Mammary epithelial cell (primary cell): ENCODE measurements at regions of chr16 and their contacts with region 1.

Region 1: GRCh38 chr16:2829501-2830356 is at the start of gene ZG16B:
- DNase-seq: peak; percentile 35
- H3K4me3 ChIP-seq: no peak within 1 kb of the TSS
- H3K27ac ChIP-seq: no peak within 1 kb of the TSS
- H3K4me1 ChIP-seq: no peaks in the 10 kb centered on the region
- H3K27me3 ChIP-seq: peaks cover 8% of the 10 kb centered on the region
- CTCF ChIP-seq: no peak
- total RNA-seq, gene ZG16B: 2.7 TPM in 1 of 2 donors, not detected in the other

Region 2: GRCh38 chr16:2764718-2765117 is 65.0 kb before region 1 on chr16:
- CTCF ChIA-PET with region 1: no interaction called
- dilution Hi-C with region 1: loop called (anchors 5 kb)
- in situ Hi-C with region 1: no loop called
- intact Hi-C with region 1: no loop called
- DNase-seq: no peak
- H3K4me3 ChIP-seq: no peak overlapping the region
- H3K27ac ChIP-seq: no peak overlapping the region
- H3K4me1 ChIP-seq: peaks cover 28% of the 10 kb centered on the region
- H3K27me3 ChIP-seq: no peaks in the 10 kb centered on the region
- CTCF ChIP-seq: peak in 1 of 2 donors; percentile 4

Region 3: DNA sequence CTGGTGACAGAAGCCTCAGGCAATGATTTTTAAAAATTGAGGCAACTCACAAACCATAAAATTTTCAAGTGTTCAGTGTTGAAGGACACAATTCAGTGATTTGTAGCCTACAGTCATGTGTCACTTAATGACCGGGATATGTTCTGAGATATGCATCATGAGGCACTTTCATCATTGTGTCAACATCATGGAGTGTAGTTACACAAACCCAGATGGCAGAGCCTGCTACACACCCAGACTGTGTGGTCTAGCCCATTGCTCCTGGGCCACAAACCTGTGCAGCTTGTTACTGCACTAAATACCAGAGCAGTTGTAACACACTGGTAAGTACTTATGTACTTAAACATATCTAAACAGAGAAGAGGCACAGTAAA is 29.9 kb before region 1 on chr16:
- CTCF ChIA-PET with region 1: no interaction called
- dilution Hi-C with region 1: loop called (anchors 5 kb)
- in situ Hi-C with region 1: no loop called
- intact Hi-C with region 1: no loop called
- DNase-seq: peak; percentile 56
- H3K4me3 ChIP-seq: no peak overlapping the region
- H3K27ac ChIP-seq: no peak overlapping the region
- H3K4me1 ChIP-seq: no peaks in the 10 kb centered on the region
- H3K27me3 ChIP-seq: no peaks in the 10 kb centered on the region
- CTCF ChIP-seq: no peak

Region 4: DNA sequence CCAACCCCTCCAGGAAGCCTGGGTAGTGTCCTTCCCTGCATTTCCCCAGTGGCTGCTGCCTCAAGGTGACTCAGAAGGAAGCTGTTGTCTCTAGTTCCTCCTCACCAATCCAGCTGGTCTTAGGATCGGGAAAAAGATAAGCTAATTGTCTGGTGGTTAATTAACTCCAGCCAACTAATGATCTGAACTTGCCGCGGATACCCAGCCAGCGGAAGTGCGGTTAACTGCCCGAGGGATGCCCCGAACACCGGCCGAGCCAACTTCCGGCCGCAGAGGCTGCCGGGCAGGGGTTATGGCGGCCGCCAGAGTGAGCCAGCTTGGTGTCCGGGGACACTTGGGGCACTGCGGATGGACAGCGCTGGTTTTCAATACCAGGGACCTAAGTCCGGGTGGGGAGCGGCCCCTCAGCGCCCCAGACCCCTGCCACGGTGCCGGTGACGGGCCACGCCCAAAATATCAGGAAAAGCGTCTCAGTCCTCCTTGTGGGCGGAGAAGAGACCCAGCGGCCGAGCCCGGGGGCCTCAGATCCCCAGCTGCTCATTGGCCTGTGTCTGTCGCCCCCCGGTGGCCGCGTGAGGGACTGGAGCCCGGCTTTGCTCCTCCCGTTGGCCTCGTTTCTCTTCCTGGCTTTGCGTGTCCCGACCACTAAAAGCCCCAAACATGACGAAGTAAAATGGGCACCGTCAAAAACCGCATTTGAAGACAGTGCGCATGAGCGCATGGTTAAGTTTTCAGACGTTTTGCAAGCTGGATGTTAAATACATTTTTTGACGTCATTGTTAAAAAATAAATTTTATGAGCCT is 38.5 kb after region 1 on chr16:
- CTCF ChIA-PET with region 1: no interaction called
- dilution Hi-C with region 1: loop called (anchors 5 kb)
- in situ Hi-C with region 1: no loop called
- intact Hi-C with region 1: no loop called
- DNase-seq: peak; percentile 90
- H3K4me3 ChIP-seq: peak overlapping the region; percentile 55 to 65 (median 62)
- H3K27ac ChIP-seq: peak overlapping the region; percentile 70
- H3K4me1 ChIP-seq: peaks cover 7% of the 10 kb centered on the region
- H3K27me3 ChIP-seq: no peaks in the 10 kb centered on the region
- CTCF ChIP-seq: peak; percentile 90 to 97